PC-9 (cell line): ENCODE measurements at regions of chr16 and their contacts with region 1.

Region 1: DNA sequence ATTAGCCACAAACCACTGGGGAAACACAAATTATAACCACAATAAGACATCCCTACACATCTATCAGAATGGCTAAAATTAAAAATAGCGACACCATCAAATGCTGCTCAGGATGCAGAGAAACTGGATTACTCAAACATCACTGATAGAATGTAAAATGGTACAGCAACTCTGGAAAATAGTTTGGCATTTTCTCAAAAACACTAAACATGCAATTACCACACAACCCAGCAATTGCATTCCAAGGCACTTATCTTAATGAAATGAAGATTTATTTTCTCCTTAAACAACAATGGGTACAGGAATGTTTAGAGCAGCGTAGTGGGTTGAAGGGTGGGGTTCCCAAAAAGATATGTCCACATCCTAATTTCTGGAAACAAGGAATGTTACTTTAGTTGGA is 308.9 kb upstream of the PMFBP1 start:
- DNase-seq: no peak
- H3K4me3 ChIP-seq: no peak overlapping the region
- H3K27ac ChIP-seq: no peak overlapping the region
- H3K4me1 ChIP-seq: no peaks in the 10 kb centered on the region
- H3K27me3 ChIP-seq: no peaks in the 10 kb centered on the region
- CTCF ChIP-seq: no peak

Region 2: DNA sequence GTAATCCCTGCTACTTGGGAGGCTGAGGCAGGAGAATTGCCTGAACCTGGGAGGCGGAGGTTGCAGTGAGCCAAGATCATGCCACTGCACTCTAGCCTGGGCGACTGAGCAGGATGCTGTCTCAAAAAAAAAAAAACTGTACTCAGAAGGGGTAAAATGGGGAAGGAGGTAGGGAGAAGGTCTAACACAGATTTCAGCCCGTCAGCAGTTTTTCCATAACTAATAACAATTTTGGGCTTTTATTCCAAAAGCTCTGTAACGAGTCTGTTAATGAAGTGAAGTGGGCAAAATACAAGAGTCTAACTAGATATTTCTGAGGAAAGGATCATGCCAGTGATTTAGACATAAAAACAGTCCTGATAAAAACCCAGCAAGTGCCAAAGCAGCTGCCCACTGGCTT is 607.7 kb before region 1 on chr16:
- CTCF ChIA-PET with region 1: no interaction called
- POLR2A ChIA-PET with region 1: interaction called, 13 read pairs
- intact Hi-C with region 1: no loop called
- DNase-seq: no peak
- H3K4me3 ChIP-seq: no peak overlapping the region
- H3K27ac ChIP-seq: no peak overlapping the region
- H3K4me1 ChIP-seq: no peaks in the 10 kb centered on the region
- H3K27me3 ChIP-seq: no peaks in the 10 kb centered on the region
- CTCF ChIP-seq: no peak